Activated T-helper 1 cell treated with anti-CD3 and anti-CD28 coated beads, Interleukin-12 subunit alpha, Interleukin-12 subunit beta, Interleukin-2, Interleukin-4 antibody, amounts not matched to agents 30 ng/mL and 10 ng/mL and 1 ng/mL, durations not matched to agents 14 hours and 24 hours and 36 hours (primary cell): ENCODE measurements at regions of chr19 and their contacts with region 1.

Region 1: DNA sequence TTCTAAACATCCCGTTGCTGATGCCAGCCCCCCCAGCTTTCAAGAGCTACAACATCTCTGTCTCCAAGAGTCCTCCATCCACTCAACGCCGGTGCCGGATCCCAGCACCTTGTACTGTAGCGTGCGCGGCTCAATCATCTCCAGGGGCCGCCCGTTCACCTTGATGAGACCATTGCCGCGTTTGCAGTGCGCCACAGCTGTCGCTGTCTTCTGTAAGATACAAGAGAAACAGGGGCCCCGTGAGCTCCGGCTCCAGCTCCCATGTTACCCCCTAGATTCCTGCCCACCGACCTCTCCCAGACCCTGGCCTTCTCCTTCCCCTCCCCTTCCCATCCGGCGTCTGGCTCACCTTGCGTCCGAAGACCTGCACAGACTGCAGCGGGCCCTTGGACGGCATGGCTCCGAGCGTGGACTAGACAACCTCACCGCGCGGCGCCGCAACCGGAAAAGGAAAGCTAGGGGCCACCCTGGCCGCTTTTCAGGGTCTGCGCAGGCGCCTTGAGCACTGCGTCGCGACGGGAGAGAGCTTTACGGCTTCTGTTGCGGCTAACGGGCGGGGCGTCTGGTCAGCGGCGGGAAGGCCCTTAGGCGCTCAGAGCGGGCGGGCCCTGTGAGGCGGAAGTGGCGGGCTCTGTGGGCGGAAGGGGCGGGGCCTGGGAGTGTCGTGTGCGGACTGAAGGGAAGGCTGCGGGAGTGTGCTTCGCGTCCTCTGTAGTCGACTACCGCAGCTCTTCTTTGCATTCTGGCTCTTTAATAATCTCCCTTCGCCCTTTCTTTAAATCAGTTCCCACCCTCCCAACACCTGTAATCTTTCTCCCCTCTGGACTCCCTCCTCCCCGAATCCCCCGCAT is at the start of gene RPS16:
- DNase-seq: peak; percentile 99
- H3K4me3 Mint-ChIP-seq: peak within 1 kb of the TSS; percentile 99
- H3K27ac Mint-ChIP-seq: peak within 1 kb of the TSS; percentile 99
- H3K4me1 Mint-ChIP-seq: peaks cover 37% of the 10 kb centered on the region
- H3K27me3 Mint-ChIP-seq: no peaks in the 10 kb centered on the region
- total RNA-seq, gene RPS16: 2,440 and 2,532 TPM in 2 replicates

Region 2: GRCh38 chr19:39390755-39391592 is 44.8 kb before region 1 on chr19 and contains the starts of genes MED29 and PAF1:
- intact Hi-C with region 1: loop called (anchors 1 kb)
- DNase-seq: peak; percentile 95
- H3K4me3 Mint-ChIP-seq: peak within 1 kb of the TSS; percentile 98
- H3K27ac Mint-ChIP-seq: peak within 1 kb of the TSS; percentile 93
- H3K4me1 Mint-ChIP-seq: peaks cover 31% of the 10 kb centered on the region
- H3K27me3 Mint-ChIP-seq: no peaks in the 10 kb centered on the region
- total RNA-seq, gene MED29: 37.5 and 45.8 TPM in 2 replicates
- total RNA-seq, gene PAF1: 54.8 and 57.3 TPM in 2 replicates

Region 3: GRCh38 chr19:39397360-39398296 is 38.1 kb before region 1 on chr19:
- intact Hi-C with region 1: loop called (anchors 1 kb)
- DNase-seq: peak; percentile 88
- H3K4me3 Mint-ChIP-seq: no peak overlapping the region
- H3K27ac Mint-ChIP-seq: peak overlapping the region; percentile 67
- H3K4me1 Mint-ChIP-seq: peaks cover 58% of the 10 kb centered on the region
- H3K27me3 Mint-ChIP-seq: no peaks in the 10 kb centered on the region

Region 4: DNA sequence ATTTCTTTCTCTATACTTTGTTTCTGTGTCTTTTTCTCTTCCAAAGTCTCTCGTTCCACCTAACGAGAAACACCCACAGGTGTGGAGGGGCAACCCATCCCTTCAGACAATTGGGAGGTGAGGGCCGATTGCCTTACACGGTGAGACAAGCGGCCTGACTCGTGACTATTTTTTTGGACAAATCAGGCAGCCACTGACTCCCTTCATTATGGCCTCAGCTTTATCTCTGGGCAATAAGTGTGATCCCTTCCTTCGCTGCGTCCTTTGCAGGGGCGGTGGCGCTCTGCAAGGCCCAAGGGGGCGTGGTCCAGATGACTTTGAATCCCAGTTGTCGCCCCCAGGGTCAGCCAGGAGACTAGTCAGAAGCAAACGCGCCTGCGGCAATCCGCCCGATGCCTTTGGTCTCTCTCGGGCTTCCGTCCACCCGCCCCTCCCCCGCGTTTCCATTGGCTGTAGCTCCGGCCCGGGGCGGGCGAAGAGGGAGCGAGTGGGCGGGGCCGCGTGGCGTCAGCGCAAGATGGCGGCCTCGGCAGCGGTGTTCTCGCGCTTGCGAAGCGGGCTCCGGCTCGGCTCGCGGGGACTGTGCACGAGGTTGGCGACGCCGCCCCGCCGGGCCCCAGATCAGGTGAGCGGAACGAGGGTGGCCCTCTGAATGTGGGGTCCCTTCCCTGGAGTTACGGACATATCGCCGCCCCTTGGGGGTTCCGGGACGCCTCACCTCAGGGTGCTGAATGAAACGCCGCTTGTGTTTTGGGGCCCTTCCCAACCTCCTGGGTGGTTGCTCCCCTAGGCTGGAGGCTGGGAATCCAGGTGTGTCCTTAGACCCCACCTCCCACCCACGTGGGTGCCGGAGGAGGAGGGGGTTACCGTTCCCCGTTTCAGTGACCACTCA is 44.9 kb after region 1 on chr19 and contains the start of gene TIMM50:
- intact Hi-C with region 1: loop called (anchors 1 kb)
- DNase-seq: peak; percentile 96
- H3K4me3 Mint-ChIP-seq: peak within 1 kb of the TSS; percentile 95
- H3K27ac Mint-ChIP-seq: peak within 1 kb of the TSS; percentile 94
- H3K4me1 Mint-ChIP-seq: peaks cover 28% of the 10 kb centered on the region
- H3K27me3 Mint-ChIP-seq: no peaks in the 10 kb centered on the region
- total RNA-seq, gene TIMM50: 121 and 127 TPM in 2 replicates